ENCODE measurements at regions of chrX and their contacts with region 1.

Region 1: GRCh38 chrX:129823115-129823514 is 20.6 kb downstream of the ZDHHC9 start:
- DNase-seq: peak; percentile 50
- H3K4me3 Mint-ChIP-seq: no peak overlapping the region
- H3K27ac Mint-ChIP-seq: peak overlapping the region; percentile 80
- H3K4me1 Mint-ChIP-seq: peaks cover 23% of the 10 kb centered on the region
- H3K27me3 Mint-ChIP-seq: no peaks in the 10 kb centered on the region

Region 2: DNA sequence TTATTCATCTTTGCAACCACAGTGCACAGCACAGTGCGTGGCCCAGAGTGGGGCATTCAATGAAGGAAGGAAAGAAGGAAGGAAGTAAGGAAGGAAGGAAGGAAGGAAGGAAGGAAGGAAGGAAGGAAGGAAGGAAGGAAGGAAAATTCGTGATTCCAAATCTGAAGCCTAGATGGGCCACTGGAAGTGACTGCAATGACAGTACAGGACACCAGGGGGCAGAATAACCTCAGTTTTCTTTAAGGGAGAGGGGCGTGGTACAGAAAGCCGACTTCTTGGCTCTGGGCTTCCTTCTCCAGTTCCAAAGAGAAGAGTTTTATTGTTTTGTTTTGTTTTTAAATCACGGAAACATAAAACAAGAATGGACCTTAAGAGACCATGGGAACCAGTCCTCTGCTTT is 216.2 kb before region 1 on chrX:
- CTCF ChIA-PET with region 1: interaction called, 13 read pairs
- POLR2A ChIA-PET with region 1: no interaction called
- DNase-seq: peak; percentile 52
- H3K4me3 Mint-ChIP-seq: no peak overlapping the region
- H3K27ac Mint-ChIP-seq: no peak overlapping the region
- H3K4me1 Mint-ChIP-seq: peaks cover 23% of the 10 kb centered on the region
- H3K27me3 Mint-ChIP-seq: peaks cover 3% of the 10 kb centered on the region

Region 3: GRCh38 chrX:129637217-129638109 is 185.7 kb before region 1 on chrX:
- CTCF ChIA-PET with region 1: interaction called, 28 read pairs
- POLR2A ChIA-PET with region 1: no interaction called
- DNase-seq: peak; percentile 74
- H3K4me3 Mint-ChIP-seq: no peak overlapping the region
- H3K27ac Mint-ChIP-seq: no peak overlapping the region
- H3K4me1 Mint-ChIP-seq: peaks cover 7% of the 10 kb centered on the region
- H3K27me3 Mint-ChIP-seq: no peaks in the 10 kb centered on the region

Region 4: DNA sequence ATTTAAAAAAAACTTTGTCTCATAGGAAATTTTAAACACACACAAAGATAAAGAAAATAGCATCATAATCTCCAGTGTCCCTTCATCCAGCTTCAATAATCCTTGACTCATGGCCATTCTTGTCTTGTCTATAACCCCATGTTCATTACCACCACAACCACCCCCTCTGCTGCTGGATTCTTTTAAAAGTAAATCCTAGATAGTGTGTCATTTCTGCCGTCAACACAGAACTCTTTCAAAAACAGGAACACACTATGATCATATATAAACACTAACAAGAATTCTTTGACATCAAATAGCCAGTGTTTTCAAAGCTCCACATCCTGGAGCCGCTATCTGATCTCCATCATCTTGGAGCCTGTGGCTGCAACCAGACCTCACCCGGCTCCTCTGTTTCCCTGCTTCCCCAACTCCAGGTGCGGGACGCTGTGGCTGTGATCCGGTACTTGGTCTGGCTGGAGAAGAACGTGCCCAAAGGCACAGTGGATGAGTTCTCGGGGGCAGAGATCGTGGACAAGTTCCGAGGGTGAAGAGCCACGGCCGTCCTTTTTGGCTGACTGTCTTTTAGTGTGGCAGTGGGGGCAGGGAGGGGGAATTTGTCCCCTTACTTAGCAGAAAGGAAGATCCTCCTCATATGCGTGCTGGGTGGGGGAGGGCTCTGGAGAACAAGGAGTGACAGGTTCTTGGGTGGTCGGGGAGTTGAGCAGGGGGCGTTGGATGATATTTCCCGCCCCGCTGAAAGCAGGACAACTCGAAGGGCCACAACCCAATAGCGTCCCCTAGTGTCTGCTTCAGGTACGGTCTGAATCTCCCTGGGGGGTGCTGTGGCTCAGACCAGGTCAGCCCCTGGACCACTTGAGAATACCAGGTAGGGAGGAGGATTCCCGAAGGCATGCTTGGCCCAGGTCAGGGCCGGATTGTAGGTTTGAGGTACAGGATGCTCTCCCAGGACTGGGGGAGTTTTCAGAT is 68.8 kb before region 1 on chrX:
- CTCF ChIA-PET with region 1: interaction called, 14 read pairs
- POLR2A ChIA-PET with region 1: interaction called, 5 read pairs
- DNase-seq: no peak
- H3K4me3 Mint-ChIP-seq: no peak overlapping the region
- H3K27ac Mint-ChIP-seq: peak overlapping the region; percentile 86
- H3K4me1 Mint-ChIP-seq: peaks cover 55% of the 10 kb centered on the region
- H3K27me3 Mint-ChIP-seq: no peaks in the 10 kb centered on the region

Region 5: DNA sequence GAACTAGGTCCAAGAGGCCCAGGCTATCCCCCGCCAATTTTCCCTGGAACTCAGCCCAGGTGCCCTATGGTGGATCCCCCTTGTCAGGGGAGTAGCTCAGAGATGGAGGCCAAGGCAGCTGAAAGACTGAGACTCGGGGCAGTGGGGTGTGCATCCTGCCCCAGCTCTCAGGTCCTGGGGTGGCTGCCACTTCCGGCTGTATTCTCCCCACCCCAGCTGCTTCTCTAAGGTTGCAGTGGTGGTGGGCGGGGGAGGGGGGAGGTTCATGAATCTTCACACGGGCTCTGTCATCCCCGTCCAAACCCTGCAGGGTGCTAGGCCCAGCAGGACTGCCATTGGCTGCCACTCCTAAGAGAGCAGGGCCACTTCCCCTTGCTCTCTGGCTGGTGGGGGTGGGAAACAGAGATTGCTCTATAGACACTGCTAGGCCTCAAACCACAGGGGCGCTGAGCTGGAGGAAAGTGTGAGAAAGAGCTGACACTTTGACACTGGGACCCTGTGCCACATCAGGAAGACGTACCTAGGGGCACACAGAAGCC is 41.9 kb before region 1 on chrX:
- CTCF ChIA-PET with region 1: interaction called, 17 read pairs
- POLR2A ChIA-PET with region 1: interaction called, 11 read pairs
- DNase-seq: peak; percentile 89
- H3K4me3 Mint-ChIP-seq: peak overlapping the region; percentile 81
- H3K27ac Mint-ChIP-seq: peak overlapping the region; percentile 92
- H3K4me1 Mint-ChIP-seq: peaks cover 62% of the 10 kb centered on the region
- H3K27me3 Mint-ChIP-seq: no peaks in the 10 kb centered on the region

Region 6: DNA sequence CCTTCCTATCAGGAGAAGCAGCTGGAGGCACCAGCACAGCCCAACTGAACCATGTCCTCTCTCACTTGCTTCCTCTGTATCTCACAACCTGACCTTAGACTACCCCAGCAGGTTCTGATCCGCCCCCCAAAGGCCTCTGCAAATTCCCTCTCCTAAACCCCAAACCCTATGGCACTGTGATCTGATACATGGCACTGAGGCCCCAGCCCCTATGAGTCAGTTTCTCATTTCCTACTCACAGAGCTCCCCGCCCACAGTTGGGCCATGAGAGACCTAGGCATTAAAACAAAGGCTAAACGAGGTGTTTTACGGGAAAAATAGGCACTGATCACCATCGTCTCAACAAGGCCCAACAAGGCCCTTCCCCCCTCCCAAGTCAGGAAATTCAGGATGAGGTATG is 24.2 kb before region 1 on chrX:
- CTCF ChIA-PET with region 1: interaction called, 12 read pairs
- POLR2A ChIA-PET with region 1: interaction called, 7 read pairs
- DNase-seq: no peak
- H3K4me3 Mint-ChIP-seq: no peak overlapping the region
- H3K27ac Mint-ChIP-seq: peak overlapping the region; percentile 66
- H3K4me1 Mint-ChIP-seq: peaks cover 34% of the 10 kb centered on the region
- H3K27me3 Mint-ChIP-seq: no peaks in the 10 kb centered on the region

Measured in activated CD4-positive, alpha-beta memory T cell treated with anti-CD3 and anti-CD28 coated beads, Interleukin-2, amount 10 ng/mL, durations not matched to agents 7 days and 5 days (primary cell).